ENCODE measurements at regions of chr9 and their contacts with region 1.

Region 1: GRCh38 chr9:123349691-123350480 is 6.1 kb upstream of the CRB2 start:
- DNase-seq: peak; percentile 53

Region 2: GRCh38 chr9:123091459-123091858 is 258.4 kb before region 1 on chr9:
- in situ Hi-C with region 1: loop called (anchors 10 kb)
- DNase-seq: no peak